ENCODE measurements at regions of chr10 and their contacts with region 1.

Region 1: GRCh38 chr10:70146489-70147258 is at the start of gene TYSND1:
- DNase-seq: peak; percentile 80 to 95 (median 90)
- ATAC-seq: peak; percentile 80 to 86 (median 86)
- H3K4me3 ChIP-seq: peak within 1 kb of the TSS; percentile 70 to 81
- H3K4me3 Mint-ChIP-seq: peak within 1 kb of the TSS; percentile 89 to 92 (median 91)
- H3K27ac ChIP-seq: peak within 1 kb of the TSS; percentile 70
- H3K27ac Mint-ChIP-seq: peak within 1 kb of the TSS; percentile 93 to 94
- H3K4me1 ChIP-seq: peaks cover 7 to 34% of the 10 kb centered on the region in 2 experiments
- H3K4me1 Mint-ChIP-seq: peaks cover 39 to 46% (median 42%) of the 10 kb centered on the region in 3 donors
- H3K27me3 ChIP-seq: no peaks in the 10 kb centered on the region
- H3K27me3 Mint-ChIP-seq: no peaks in the 10 kb centered on the region
- total RNA-seq, gene TYSND1: 18.3 to 41.0 (median 38.7) TPM

Region 2: GRCh38 chr10:70115948-70116682 is 30.6 kb before region 1 on chr10:
- CTCF ChIA-PET with region 1: interaction called, 19 to 23 read pairs
- POLR2A ChIA-PET with region 1: interaction called in 1 of 2 experiments, 6 read pairs
- DNase-seq: peak in 28 of 35 experiments; percentile 14 to 74 (median 44)
- ATAC-seq: peak; percentile 64 to 86 (median 75)
- H3K4me3 ChIP-seq: no peak overlapping the region
- H3K4me3 Mint-ChIP-seq: no peak overlapping the region
- H3K27ac ChIP-seq: no peak overlapping the region
- H3K27ac Mint-ChIP-seq: no peak overlapping the region
- H3K4me1 ChIP-seq: peaks cover 0 to 10% of the 10 kb centered on the region in 2 experiments
- H3K4me1 Mint-ChIP-seq: peaks cover 6 to 8% (median 8%) of the 10 kb centered on the region in 3 donors
- H3K27me3 ChIP-seq: no peaks in the 10 kb centered on the region
- H3K27me3 Mint-ChIP-seq: no peaks in the 10 kb centered on the region

Region 3: GRCh38 chr10:70169649-70170364 is 23.1 kb after region 1 on chr10:
- CTCF ChIA-PET with region 1: interaction called, 6 to 104 read pairs
- POLR2A ChIA-PET with region 1: interaction called, 4 to 27 read pairs
- DNase-seq: peak in 7 of 35 experiments; percentile 6 to 32 (median 17)
- ATAC-seq: peak; percentile 21 to 28 (median 24)
- H3K4me3 ChIP-seq: peak overlapping the region; percentile 77 to 96
- H3K4me3 Mint-ChIP-seq: peak overlapping the region; percentile 89 to 93 (median 92)
- H3K27ac ChIP-seq: peak overlapping the region; percentile 75
- H3K27ac Mint-ChIP-seq: peak overlapping the region; percentile 77 to 87
- H3K4me1 ChIP-seq: peaks cover 34 to 59% of the 10 kb centered on the region in 2 experiments
- H3K4me1 Mint-ChIP-seq: peaks cover 58 to 65% (median 64%) of the 10 kb centered on the region in 3 donors
- H3K27me3 ChIP-seq: no peaks in the 10 kb centered on the region
- H3K27me3 Mint-ChIP-seq: no peaks in the 10 kb centered on the region

Region 4: GRCh38 chr10:70221030-70221429 is 74.4 kb after region 1 on chr10:
- CTCF ChIA-PET with region 1: interaction called, 3 to 19 read pairs
- POLR2A ChIA-PET with region 1: interaction called in 1 of 2 experiments, 3 read pairs
- DNase-seq: no peak
- ATAC-seq: no peak
- H3K4me3 ChIP-seq: no peak overlapping the region
- H3K4me3 Mint-ChIP-seq: peak overlapping the region in 1 of 3 donors; percentile 56
- H3K27ac ChIP-seq: peak overlapping the region; percentile 6
- H3K27ac Mint-ChIP-seq: peak overlapping the region; percentile 83 to 85
- H3K4me1 ChIP-seq: peaks cover 3 to 6% of the 10 kb centered on the region in 2 experiments
- H3K4me1 Mint-ChIP-seq: peaks cover 14 to 18% (median 16%) of the 10 kb centered on the region in 3 donors
- H3K27me3 ChIP-seq: no peaks in the 10 kb centered on the region
- H3K27me3 Mint-ChIP-seq: no peaks in the 10 kb centered on the region

Measured in T-cell (primary cell).